CD8-positive, alpha-beta T cell (primary cell): ENCODE measurements at regions of chr6 and their contacts with region 1.

Region 1: GRCh38 chr6:24949020-24949569 is 13.3 kb upstream of the RIPOR2 start:
- DNase-seq: peak in 7 of 9 experiments; percentile 47 to 89 (median 73)
- ATAC-seq: peak; percentile 55
- H3K4me3 ChIP-seq: peak overlapping the region; percentile 9 to 38
- H3K4me3 Mint-ChIP-seq: peak overlapping the region; percentile 69
- H3K27ac ChIP-seq: peak overlapping the region; percentile 50 to 76
- H3K27ac Mint-ChIP-seq: peak overlapping the region; percentile 91
- H3K4me1 ChIP-seq: peaks cover 69% of the 10 kb centered on the region
- H3K4me1 Mint-ChIP-seq: peaks cover 74% of the 10 kb centered on the region
- H3K27me3 ChIP-seq: no peaks in the 10 kb centered on the region
- H3K27me3 Mint-ChIP-seq: no peaks in the 10 kb centered on the region
- CTCF ChIP-seq: no peak

Region 2: GRCh38 chr6:24910961-24911712 is 38.0 kb before region 1 on chr6:
- CTCF ChIA-PET with region 1: interaction called, 11 read pairs
- POLR2A ChIA-PET with region 1: interaction called, 44 read pairs
- intact Hi-C with region 1: no loop called
- DNase-seq: peak in 7 of 9 experiments; percentile 29 to 77 (median 68)
- ATAC-seq: peak; percentile 38
- H3K4me3 ChIP-seq: peak overlapping the region; percentile 57 to 62
- H3K4me3 Mint-ChIP-seq: peak overlapping the region; percentile 94
- H3K27ac ChIP-seq: peak overlapping the region; percentile 62 to 69
- H3K27ac Mint-ChIP-seq: peak overlapping the region; percentile 98
- H3K4me1 ChIP-seq: peaks cover 92% of the 10 kb centered on the region
- H3K4me1 Mint-ChIP-seq: peaks cover 93% of the 10 kb centered on the region
- H3K27me3 ChIP-seq: no peaks in the 10 kb centered on the region
- H3K27me3 Mint-ChIP-seq: no peaks in the 10 kb centered on the region
- CTCF ChIP-seq: no peak

Region 3: GRCh38 chr6:24919004-24919892 is 29.8 kb before region 1 on chr6:
- CTCF ChIA-PET with region 1: interaction called, 13 read pairs
- POLR2A ChIA-PET with region 1: interaction called, 8 read pairs
- intact Hi-C with region 1: no loop called
- DNase-seq: peak in 1 of 9 experiments; percentile 53
- ATAC-seq: peak; percentile 36
- H3K4me3 ChIP-seq: peak overlapping the region; percentile 2 to 29
- H3K4me3 Mint-ChIP-seq: peak overlapping the region; percentile 69
- H3K27ac ChIP-seq: peak overlapping the region; percentile 2 to 51
- H3K27ac Mint-ChIP-seq: peak overlapping the region; percentile 92
- H3K4me1 ChIP-seq: peaks cover 94% of the 10 kb centered on the region
- H3K4me1 Mint-ChIP-seq: peaks cover 92% of the 10 kb centered on the region
- H3K27me3 ChIP-seq: no peaks in the 10 kb centered on the region
- H3K27me3 Mint-ChIP-seq: no peaks in the 10 kb centered on the region
- CTCF ChIP-seq: no peak

Region 4: GRCh38 chr6:24960991-24961475 is 11.9 kb after region 1 on chr6:
- CTCF ChIA-PET with region 1: interaction called, 5 read pairs
- POLR2A ChIA-PET with region 1: interaction called, 11 read pairs
- intact Hi-C with region 1: loop called in 1 of 2 experiments (anchors 1 kb)
- DNase-seq: peak in 3 of 9 experiments; percentile 26 to 71 (median 41)
- ATAC-seq: peak; percentile 69
- H3K4me3 ChIP-seq: peak overlapping the region in 1 of 2 experiments; percentile 6
- H3K4me3 Mint-ChIP-seq: peak overlapping the region; percentile 54
- H3K27ac ChIP-seq: peak overlapping the region; percentile 5 to 71
- H3K27ac Mint-ChIP-seq: peak overlapping the region; percentile 92
- H3K4me1 ChIP-seq: peaks cover 82% of the 10 kb centered on the region
- H3K4me1 Mint-ChIP-seq: peaks cover 84% of the 10 kb centered on the region
- H3K27me3 ChIP-seq: no peaks in the 10 kb centered on the region
- H3K27me3 Mint-ChIP-seq: no peaks in the 10 kb centered on the region
- CTCF ChIP-seq: no peak

Region 5: DNA sequence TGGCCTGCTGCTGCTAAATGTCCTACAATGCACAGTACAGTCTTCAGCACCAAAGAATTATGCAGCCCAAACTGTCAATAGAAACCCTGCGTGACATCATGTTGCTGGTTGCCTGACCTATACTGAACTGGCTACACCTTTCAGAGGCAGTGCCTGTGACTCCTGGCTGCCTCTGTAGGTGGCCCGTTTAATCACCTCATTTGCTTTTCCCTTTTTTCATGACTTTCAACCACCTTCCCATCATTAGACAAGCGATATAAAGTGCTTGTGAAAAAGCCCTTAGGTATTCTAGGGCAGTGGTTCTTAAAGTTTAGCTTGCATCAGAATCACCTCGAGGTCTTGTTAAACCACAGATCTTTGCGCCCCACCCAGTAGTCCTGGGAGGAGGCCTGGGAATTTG is 19.7 kb after region 1 on chr6:
- CTCF ChIA-PET with region 1: interaction called, 3 read pairs
- POLR2A ChIA-PET with region 1: interaction called, 11 read pairs
- intact Hi-C with region 1: loop called in 1 of 2 experiments (anchors 2 kb)
- DNase-seq: peak in 2 of 9 experiments; percentile 30 to 52
- ATAC-seq: peak; percentile 70
- H3K4me3 ChIP-seq: no peak overlapping the region
- H3K4me3 Mint-ChIP-seq: no peak overlapping the region
- H3K27ac ChIP-seq: peak overlapping the region in 1 of 2 experiments; percentile 62
- H3K27ac Mint-ChIP-seq: peak overlapping the region; percentile 41
- H3K4me1 ChIP-seq: peaks cover 50% of the 10 kb centered on the region
- H3K4me1 Mint-ChIP-seq: peaks cover 84% of the 10 kb centered on the region
- H3K27me3 ChIP-seq: no peaks in the 10 kb centered on the region
- H3K27me3 Mint-ChIP-seq: no peaks in the 10 kb centered on the region
- CTCF ChIP-seq: no peak

Region 6: DNA sequence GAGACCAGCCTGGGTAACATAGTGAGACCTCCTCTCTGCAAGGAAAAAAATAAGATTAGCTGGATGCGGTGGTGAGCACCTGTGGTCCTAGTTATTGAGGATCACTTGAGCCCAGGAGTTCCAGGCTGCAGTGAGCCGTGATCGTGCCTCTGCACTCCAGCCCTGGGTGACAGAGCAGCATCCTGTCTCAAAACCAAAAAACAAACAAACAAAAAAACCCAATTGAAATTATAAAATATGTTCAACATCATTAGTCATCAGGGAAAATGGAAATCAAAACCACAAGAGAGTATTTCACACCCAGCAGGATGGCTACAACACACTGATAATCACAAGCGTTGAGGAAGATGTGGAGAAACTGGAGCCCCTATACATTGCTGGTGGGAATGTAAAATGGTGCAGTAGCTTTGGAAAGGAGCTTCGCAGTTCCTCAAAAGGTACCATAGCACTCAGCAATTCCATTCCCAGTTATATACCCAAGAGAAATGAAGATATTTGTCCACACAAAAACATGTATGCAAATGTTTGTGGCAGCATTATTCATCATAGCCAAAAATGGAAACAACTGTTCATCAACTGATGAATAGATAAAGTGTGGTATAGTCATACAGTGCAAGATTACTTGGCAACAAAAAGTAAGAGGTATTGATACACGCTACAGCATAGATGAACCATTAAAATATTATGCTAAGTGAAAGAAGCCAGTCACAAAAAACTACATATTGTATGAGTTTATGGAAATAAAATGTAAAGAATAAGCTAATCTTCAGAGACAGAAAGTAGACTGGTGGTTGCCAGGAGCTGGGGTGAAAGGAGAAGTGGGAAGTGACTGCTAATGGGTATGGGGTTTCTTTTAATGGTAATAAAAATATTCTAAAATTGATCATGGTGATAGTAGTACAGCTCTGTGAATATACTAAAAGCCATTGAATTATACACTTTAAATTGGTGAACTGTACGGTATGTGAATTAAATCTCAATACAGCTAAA is 25.4 kb after region 1 on chr6:
- CTCF ChIA-PET with region 1: interaction called, 4 read pairs
- POLR2A ChIA-PET with region 1: interaction called, 10 read pairs
- intact Hi-C with region 1: loop called in 1 of 2 experiments (anchors 2 kb)
- DNase-seq: peak in 4 of 9 experiments; percentile 33 to 70 (median 42)
- ATAC-seq: peak; percentile 84
- H3K4me3 ChIP-seq: no peak overlapping the region
- H3K4me3 Mint-ChIP-seq: peak overlapping the region; percentile 13
- H3K27ac ChIP-seq: peak overlapping the region in 1 of 2 experiments; percentile 73
- H3K27ac Mint-ChIP-seq: peak overlapping the region; percentile 89
- H3K4me1 ChIP-seq: peaks cover 39% of the 10 kb centered on the region
- H3K4me1 Mint-ChIP-seq: peaks cover 65% of the 10 kb centered on the region
- H3K27me3 ChIP-seq: no peaks in the 10 kb centered on the region
- H3K27me3 Mint-ChIP-seq: no peaks in the 10 kb centered on the region
- CTCF ChIP-seq: no peak

Region 7: GRCh38 chr6:25042036-25042521 is 93.0 kb after region 1 on chr6:
- CTCF ChIA-PET with region 1: no interaction called
- POLR2A ChIA-PET with region 1: no interaction called
- intact Hi-C with region 1: no loop called
- DNase-seq: peak in 8 of 9 experiments; percentile 20 to 80 (median 59)
- ATAC-seq: peak; percentile 63
- H3K4me3 ChIP-seq: peak overlapping the region; percentile 52 to 82
- H3K4me3 Mint-ChIP-seq: peak overlapping the region; percentile 94
- H3K27ac ChIP-seq: peak overlapping the region; percentile 58 to 90
- H3K27ac Mint-ChIP-seq: peak overlapping the region; percentile 92
- H3K4me1 ChIP-seq: peaks cover 48% of the 10 kb centered on the region
- H3K4me1 Mint-ChIP-seq: peaks cover 60% of the 10 kb centered on the region
- H3K27me3 ChIP-seq: no peaks in the 10 kb centered on the region
- H3K27me3 Mint-ChIP-seq: no peaks in the 10 kb centered on the region
- CTCF ChIP-seq: no peak

Region 8: GRCh38 chr6:25147223-25147622 is 198.1 kb after region 1 on chr6:
- CTCF ChIA-PET with region 1: no interaction called
- POLR2A ChIA-PET with region 1: no interaction called
- intact Hi-C with region 1: no loop called
- DNase-seq: no peak
- ATAC-seq: no peak
- H3K4me3 ChIP-seq: no peak overlapping the region
- H3K4me3 Mint-ChIP-seq: no peak overlapping the region
- H3K27ac ChIP-seq: no peak overlapping the region
- H3K27ac Mint-ChIP-seq: no peak overlapping the region
- H3K4me1 ChIP-seq: no peaks in the 10 kb centered on the region
- H3K4me1 Mint-ChIP-seq: no peaks in the 10 kb centered on the region
- H3K27me3 ChIP-seq: no peaks in the 10 kb centered on the region
- H3K27me3 Mint-ChIP-seq: no peaks in the 10 kb centered on the region
- CTCF ChIP-seq: no peak